ENCODE measurements at regions of chr3 and their contacts with region 1.

Region 1: DNA sequence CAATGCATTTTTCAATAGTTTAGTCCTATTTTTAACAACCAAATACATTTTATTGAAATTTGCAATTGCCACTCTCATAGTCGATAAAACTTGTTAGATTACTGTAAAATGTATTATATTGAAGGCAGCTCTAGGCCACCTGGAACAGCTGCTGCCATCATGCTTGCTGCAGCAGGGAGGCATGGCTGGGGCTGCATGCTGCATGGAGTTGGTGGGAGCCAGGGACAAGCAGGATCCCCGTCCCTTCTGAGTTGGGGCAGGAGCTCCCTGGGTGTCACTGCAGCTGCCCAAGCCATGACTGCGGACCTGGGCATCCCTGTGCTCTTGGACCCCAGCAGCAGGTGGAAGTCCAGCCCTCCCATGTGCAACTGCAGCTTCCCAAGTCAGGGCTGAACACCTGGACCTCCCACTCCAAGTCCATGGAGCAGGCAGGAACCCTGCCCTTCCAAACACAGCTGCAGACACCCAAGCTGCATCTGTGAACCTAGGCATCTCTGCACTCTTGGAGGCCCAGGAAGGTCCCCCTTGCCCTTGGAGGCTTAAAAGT is 742.0 kb downstream of the ZBBX start:
- DNase-seq: no peak
- ATAC-seq: no peak
- H3K4me3 ChIP-seq: no peak overlapping the region
- H3K4me3 Mint-ChIP-seq: no peak overlapping the region
- H3K27ac ChIP-seq: no peak overlapping the region
- H3K27ac Mint-ChIP-seq: no peak overlapping the region
- H3K4me1 ChIP-seq: no peaks in the 10 kb centered on the region
- H3K4me1 Mint-ChIP-seq: no peaks in the 10 kb centered on the region
- H3K27me3 ChIP-seq: no peaks in the 10 kb centered on the region
- H3K27me3 Mint-ChIP-seq: no peaks in the 10 kb centered on the region
- CTCF ChIP-seq: no peak

Region 2: GRCh38 chr3:166706094-166706493 is 68.0 kb after region 1 on chr3:
- CTCF ChIA-PET with region 1: no interaction called
- POLR2A ChIA-PET with region 1: no interaction called
- intact Hi-C with region 1: loop called in 1 of 2 experiments (anchors 10 kb)
- DNase-seq: no peak
- ATAC-seq: no peak
- H3K4me3 ChIP-seq: no peak overlapping the region
- H3K4me3 Mint-ChIP-seq: no peak overlapping the region
- H3K27ac ChIP-seq: no peak overlapping the region
- H3K27ac Mint-ChIP-seq: no peak overlapping the region
- H3K4me1 ChIP-seq: no peaks in the 10 kb centered on the region
- H3K4me1 Mint-ChIP-seq: no peaks in the 10 kb centered on the region
- H3K27me3 ChIP-seq: no peaks in the 10 kb centered on the region
- H3K27me3 Mint-ChIP-seq: no peaks in the 10 kb centered on the region
- CTCF ChIP-seq: no peak

Region 3: DNA sequence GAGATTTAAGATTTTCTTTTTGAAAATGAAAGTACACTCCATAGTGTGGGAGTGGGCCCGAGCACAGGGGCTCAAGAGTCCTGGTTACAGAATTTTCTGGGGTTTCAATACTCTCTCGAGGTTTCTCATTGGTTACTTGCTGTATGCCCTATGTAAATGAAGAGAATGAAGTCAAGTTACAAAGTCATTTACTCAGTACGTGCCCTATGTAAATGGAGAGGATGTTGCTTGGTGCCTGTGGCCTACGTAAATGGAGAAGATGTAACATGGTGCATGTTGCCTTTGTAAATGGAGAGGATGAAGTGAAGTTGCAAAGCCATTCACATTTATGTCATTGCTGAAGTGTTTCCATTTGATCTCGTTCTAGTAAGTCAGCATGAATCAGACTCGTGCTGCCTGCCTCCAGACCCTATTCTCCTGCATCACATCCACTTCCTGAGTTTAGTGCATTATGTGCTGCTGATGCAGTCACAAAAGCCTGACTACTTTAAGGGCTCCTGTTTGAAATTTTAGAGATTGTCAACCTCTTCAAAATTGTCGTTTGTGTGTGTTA is 440.1 kb after region 1 on chr3:
- CTCF ChIA-PET with region 1: no interaction called
- POLR2A ChIA-PET with region 1: no interaction called
- intact Hi-C with region 1: no loop called
- DNase-seq: no peak
- ATAC-seq: no peak
- H3K4me3 ChIP-seq: no peak overlapping the region
- H3K4me3 Mint-ChIP-seq: no peak overlapping the region
- H3K27ac ChIP-seq: no peak overlapping the region
- H3K27ac Mint-ChIP-seq: no peak overlapping the region
- H3K4me1 ChIP-seq: no peaks in the 10 kb centered on the region
- H3K4me1 Mint-ChIP-seq: no peaks in the 10 kb centered on the region
- H3K27me3 ChIP-seq: no peaks in the 10 kb centered on the region
- H3K27me3 Mint-ChIP-seq: no peaks in the 10 kb centered on the region
- CTCF ChIP-seq: no peak

Measured in CD8-positive, alpha-beta T cell (primary cell).